ENCODE measurements at regions of chr2 and their contacts with region 1.

Region 1: GRCh38 chr2:42944779-42945415 is 152.5 kb upstream of the HAAO start:
- DNase-seq: no peak
- H3K4me3 ChIP-seq: no peak overlapping the region
- H3K27me3 ChIP-seq: no peaks in the 10 kb centered on the region
- CTCF ChIP-seq: no peak

Region 2: GRCh38 chr2:42722320-42723190 is 222.3 kb before region 1 on chr2:
- CTCF ChIA-PET with region 1: no interaction called
- POLR2A ChIA-PET with region 1: no interaction called
- DNase-seq: peak; percentile 66
- H3K4me3 ChIP-seq: no peak overlapping the region
- H3K27me3 ChIP-seq: no peaks in the 10 kb centered on the region
- CTCF ChIP-seq: no peak

Region 3: DNA sequence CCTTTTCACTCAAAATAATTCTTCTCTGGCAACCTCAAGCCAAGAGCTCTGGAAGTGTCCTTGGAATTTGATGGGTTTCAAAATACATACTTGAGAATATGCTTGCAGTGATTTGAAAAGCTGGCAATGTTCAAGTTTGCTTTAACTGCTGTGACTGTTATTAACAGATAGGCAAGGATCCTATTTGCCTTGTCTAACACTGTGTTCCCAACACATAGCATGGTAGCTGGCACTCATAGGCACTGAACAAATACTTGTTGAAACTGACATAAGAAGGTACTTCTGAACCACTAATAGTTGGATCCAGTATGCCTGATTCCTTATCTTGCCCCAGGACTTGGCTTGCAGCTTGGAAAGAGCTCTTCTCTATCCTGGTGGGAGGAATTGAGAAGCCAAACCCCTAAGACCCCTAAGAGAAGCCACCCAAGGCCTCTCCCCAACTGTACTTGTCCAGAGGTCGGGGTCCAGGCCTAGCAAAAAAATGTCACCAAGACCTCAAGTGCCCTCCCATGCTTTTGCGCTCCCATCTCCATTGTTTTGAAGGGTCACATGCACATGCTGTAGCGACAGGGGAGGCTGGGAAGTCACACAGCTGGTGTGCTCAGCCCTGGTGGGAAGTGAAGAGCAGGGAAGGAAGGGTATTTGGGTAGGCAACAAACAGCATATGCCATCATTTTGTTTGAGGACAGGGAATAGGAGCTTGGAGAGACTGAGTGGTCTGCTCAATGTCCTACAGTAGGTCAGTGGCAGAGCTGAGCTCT is 34.1 kb before region 1 on chr2:
- CTCF ChIA-PET with region 1: no interaction called
- POLR2A ChIA-PET with region 1: no interaction called
- DNase-seq: no peak
- H3K4me3 ChIP-seq: no peak overlapping the region
- H3K27me3 ChIP-seq: no peaks in the 10 kb centered on the region
- CTCF ChIP-seq: no peak

Region 4: DNA sequence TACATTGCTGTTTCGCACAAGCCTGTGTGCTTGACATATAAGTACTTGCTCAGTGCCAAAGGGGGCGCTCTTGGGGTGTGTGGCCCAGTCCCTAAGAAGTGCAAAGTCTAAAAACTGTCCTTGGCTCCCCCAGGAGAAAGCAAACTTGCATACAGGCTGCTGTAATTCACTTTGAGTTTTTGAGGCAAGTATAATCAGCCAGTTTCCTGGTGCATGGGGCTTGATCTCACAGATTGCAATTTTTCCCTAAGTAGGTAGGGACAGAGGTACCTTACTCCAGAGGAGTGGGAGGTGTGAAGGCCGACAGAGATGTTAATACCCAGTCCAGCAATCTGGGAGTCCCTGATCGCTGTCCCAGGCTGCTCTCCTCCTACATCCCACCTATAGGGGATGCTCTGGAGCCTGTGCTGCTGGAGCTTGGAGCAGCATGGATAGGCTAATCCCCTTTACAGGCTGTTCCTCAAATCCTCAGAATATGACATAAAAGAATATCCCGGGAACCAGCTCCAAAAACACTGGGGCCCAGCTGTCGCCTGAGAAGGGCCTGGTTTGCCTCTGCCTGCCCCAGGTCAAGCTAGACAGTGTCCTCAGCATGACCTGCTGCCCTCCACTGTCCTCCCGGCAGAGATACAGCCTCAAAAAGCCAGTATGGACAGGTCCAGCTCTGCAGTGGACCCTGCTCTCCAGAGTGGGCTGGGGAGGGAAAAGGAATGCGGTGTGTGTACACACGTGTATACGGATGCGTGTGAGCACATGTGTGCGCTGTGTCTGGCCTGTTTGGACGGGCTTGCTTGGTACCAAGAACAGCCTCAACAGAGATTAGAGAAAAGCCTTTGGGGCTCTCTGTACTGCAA is 16.0 kb before region 1 on chr2:
- CTCF ChIA-PET with region 1: interaction called, 14 read pairs
- POLR2A ChIA-PET with region 1: no interaction called
- DNase-seq: no peak
- H3K4me3 ChIP-seq: no peak overlapping the region
- H3K27me3 ChIP-seq: no peaks in the 10 kb centered on the region
- CTCF ChIP-seq: peak; percentile 67

Region 5: GRCh38 chr2:42974721-42975717 is 30.1 kb after region 1 on chr2:
- CTCF ChIA-PET with region 1: interaction called, 23 read pairs
- POLR2A ChIA-PET with region 1: no interaction called
- DNase-seq: no peak
- H3K4me3 ChIP-seq: peak overlapping the region; percentile 12; the same call in 1 of the 2 replicates
- H3K27me3 ChIP-seq: no peaks in the 10 kb centered on the region
- CTCF ChIP-seq: peak; percentile 92

Region 6: GRCh38 chr2:43238176-43238575 is 293.3 kb after region 1 on chr2:
- CTCF ChIA-PET with region 1: no interaction called
- POLR2A ChIA-PET with region 1: no interaction called
- DNase-seq: no peak
- H3K4me3 ChIP-seq: no peak overlapping the region
- H3K27me3 ChIP-seq: no peaks in the 10 kb centered on the region
- CTCF ChIP-seq: no peak

Region 7: GRCh38 chr2:43484323-43484930 is 539.5 kb after region 1 on chr2:
- CTCF ChIA-PET with region 1: interaction called, 26 read pairs
- POLR2A ChIA-PET with region 1: no interaction called
- DNase-seq: peak; percentile 45
- H3K4me3 ChIP-seq: no peak overlapping the region
- H3K27me3 ChIP-seq: no peaks in the 10 kb centered on the region
- CTCF ChIP-seq: peak; percentile 46

Region 8: DNA sequence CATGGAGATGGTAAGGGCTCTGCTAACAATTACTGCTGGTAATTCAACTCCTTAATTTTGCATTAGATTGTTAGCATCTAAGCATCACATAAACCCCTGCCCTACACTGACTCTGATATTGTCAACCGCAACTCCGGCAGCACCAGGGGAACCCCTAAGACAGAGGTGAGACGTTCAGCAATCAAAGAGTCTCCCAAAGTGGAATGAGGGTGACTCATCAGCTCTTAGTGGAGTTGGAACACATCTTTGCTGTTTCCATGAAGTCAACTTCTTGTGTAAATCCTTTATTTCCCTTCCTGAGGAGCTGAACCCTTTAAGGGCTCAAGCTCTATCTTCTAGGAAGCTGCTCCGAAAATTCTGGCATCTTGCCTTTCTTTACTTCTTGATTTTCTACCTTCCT is 946.0 kb after region 1 on chr2:
- CTCF ChIA-PET with region 1: no interaction called
- POLR2A ChIA-PET with region 1: no interaction called
- DNase-seq: no peak
- H3K4me3 ChIP-seq: no peak overlapping the region
- H3K27me3 ChIP-seq: no peaks in the 10 kb centered on the region
- CTCF ChIP-seq: no peak

Measured in BJ (cell line).